Motor neuron (in vitro differentiated cells): ENCODE measurements at regions of chr2 and their contacts with region 1.

Region 1: DNA sequence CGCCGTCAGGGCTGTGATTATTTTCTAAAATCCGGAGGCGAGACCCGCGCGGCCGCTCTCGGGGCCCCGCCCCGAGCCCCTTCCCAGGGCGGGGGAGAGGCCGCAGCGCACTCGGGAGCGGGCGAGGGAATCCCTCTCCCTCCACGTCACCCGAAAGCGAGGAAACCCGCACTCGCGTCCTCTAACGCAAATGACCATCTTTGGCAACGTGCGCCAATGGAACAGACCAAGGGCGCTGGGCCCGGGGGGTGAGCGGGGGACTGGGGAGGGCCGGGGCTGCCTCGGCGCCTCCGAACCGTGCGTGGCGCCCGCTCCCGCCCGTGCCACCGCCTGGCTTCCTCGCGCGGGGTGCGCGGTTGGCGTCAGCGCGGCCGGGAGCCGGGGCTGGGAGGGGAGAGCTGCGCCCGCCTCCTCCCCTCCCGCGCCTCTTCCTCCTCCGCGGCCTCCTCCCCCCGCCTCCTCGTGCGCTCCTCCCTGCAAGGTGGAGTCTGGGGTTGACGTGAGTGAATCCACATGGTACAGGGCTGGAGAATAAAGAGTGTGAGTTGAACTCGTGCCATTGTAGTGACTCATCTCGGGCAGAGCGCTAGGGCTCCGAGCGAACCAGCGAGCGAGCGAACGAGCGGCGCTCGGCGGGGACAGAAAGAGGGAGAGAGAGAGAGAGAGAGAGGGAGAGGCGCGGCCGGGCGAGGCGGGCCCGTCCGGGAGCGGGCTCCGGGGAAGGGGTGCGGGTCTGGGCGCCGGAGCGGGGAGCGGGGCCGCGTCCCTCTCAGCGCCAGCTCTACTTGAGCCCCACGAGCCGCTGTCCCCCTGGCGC is at the start of gene FOSL2:
- ATAC-seq: peak; percentile 25 to 76 (median 68)
- H3K4me3 ChIP-seq: peak within 1 kb of the TSS; percentile 45 to 79 (median 47)
- H3K27ac ChIP-seq: peak within 1 kb of the TSS; percentile 92 to 95
- H3K4me1 ChIP-seq: peaks cover 4 to 20% of the 10 kb centered on the region in 2 donors
- total RNA-seq, gene FOSL2: 1.6 to 67.7 (median 16.1) TPM

Region 2: GRCh38 chr2:27690052-27690451 is 702.5 kb before region 1 on chr2:
- in situ Hi-C with region 1: loop called in 1 of 9 experiments (anchors 10 kb)
- ATAC-seq: no peak
- H3K4me3 ChIP-seq: no peak overlapping the region
- H3K27ac ChIP-seq: no peak overlapping the region
- H3K4me1 ChIP-seq: no peaks in the 10 kb centered on the region

Region 3: DNA sequence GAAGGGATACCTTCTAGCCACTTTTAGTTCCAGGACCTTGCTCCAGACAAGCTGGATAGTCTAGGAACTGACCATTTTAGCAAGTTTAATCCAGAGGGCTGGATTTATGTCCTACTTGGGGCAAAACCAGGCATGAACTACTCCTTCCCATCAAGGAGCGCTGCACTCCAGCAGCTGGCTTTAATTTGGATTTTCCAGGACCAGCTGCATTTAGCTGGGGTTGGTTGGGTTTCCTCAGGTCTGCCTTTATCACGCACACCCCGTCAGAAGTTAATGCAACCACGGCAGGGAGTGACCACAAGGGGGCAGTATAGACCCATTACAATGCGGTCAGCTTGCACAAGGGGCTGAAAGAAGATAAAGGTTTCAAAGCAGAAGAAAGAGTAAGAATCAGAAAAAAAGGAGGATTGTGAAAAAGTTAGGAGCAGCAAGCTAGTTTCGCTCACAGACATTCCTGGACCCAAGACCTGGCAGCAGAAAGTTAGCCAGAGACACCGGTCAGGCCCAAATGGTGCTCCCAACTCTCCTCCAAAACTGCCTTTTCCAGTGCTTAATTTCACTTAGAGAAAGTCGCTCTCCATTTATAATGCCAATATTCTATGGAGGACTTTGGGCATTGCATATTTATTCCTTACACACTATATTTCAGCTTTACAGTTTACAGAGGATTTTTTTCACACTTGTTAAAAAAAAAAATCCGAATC is 688.7 kb before region 1 on chr2:
- in situ Hi-C with region 1: loop called in 3 of 9 experiments (anchors 10 to 25 kb)
- ATAC-seq: peak; percentile 41 to 86 (median 82)
- H3K4me3 ChIP-seq: no peak overlapping the region
- H3K27ac ChIP-seq: no peak overlapping the region
- H3K4me1 ChIP-seq: no peaks in the 10 kb centered on the region

Region 4: GRCh38 chr2:27715318-27716210 is 676.9 kb before region 1 on chr2:
- in situ Hi-C with region 1: loop called in 3 of 9 experiments (anchors 10 to 25 kb)
- ATAC-seq: peak; percentile 57 to 91 (median 86)
- H3K4me3 ChIP-seq: peak overlapping the region; percentile 29 to 40 (median 33)
- H3K27ac ChIP-seq: peak overlapping the region in 1 of 2 donors; percentile 21
- H3K4me1 ChIP-seq: no peaks in the 10 kb centered on the region

Region 5: DNA sequence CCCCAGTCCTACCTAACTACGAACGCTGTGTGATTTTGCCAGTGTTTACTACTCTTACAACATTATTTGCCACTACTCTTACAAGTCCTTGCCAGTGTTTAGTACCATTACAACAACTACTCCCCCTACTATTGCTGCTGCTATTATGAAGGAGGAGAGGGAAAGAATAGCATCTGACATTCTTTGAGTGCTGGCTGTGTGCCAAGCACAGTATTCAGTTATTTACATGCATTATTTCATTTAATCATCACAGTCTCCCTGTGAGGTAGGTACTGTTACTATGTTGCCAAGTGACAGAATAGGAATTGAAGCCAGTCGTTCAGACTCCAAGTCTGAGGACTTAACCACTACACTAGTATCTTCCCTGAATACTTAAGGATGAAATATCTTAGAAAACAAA is 185.7 kb before region 1 on chr2:
- in situ Hi-C with region 1: no loop called
- ATAC-seq: peak; percentile 27 to 93 (median 68)
- H3K4me3 ChIP-seq: no peak overlapping the region
- H3K27ac ChIP-seq: no peak overlapping the region
- H3K4me1 ChIP-seq: peaks cover 0 to 13% of the 10 kb centered on the region in 2 donors